ENCODE measurements at regions of chr17 and their contacts with region 1.

Region 1: GRCh38 chr17:3935140-3935542 is 18.9 kb upstream of the P2RX1 start:
- DNase-seq: peak in 6 of 9 experiments; percentile 26 to 66 (median 42)
- ATAC-seq: peak; percentile 62
- H3K4me3 ChIP-seq: no peak overlapping the region
- H3K4me3 Mint-ChIP-seq: no peak overlapping the region
- H3K27ac ChIP-seq: no peak overlapping the region
- H3K27ac Mint-ChIP-seq: no peak overlapping the region
- H3K4me1 ChIP-seq: no peaks in the 10 kb centered on the region
- H3K4me1 Mint-ChIP-seq: peaks cover 2% of the 10 kb centered on the region
- H3K27me3 ChIP-seq: no peaks in the 10 kb centered on the region
- H3K27me3 Mint-ChIP-seq: no peaks in the 10 kb centered on the region
- CTCF ChIP-seq: peak; percentile 34

Region 2: DNA sequence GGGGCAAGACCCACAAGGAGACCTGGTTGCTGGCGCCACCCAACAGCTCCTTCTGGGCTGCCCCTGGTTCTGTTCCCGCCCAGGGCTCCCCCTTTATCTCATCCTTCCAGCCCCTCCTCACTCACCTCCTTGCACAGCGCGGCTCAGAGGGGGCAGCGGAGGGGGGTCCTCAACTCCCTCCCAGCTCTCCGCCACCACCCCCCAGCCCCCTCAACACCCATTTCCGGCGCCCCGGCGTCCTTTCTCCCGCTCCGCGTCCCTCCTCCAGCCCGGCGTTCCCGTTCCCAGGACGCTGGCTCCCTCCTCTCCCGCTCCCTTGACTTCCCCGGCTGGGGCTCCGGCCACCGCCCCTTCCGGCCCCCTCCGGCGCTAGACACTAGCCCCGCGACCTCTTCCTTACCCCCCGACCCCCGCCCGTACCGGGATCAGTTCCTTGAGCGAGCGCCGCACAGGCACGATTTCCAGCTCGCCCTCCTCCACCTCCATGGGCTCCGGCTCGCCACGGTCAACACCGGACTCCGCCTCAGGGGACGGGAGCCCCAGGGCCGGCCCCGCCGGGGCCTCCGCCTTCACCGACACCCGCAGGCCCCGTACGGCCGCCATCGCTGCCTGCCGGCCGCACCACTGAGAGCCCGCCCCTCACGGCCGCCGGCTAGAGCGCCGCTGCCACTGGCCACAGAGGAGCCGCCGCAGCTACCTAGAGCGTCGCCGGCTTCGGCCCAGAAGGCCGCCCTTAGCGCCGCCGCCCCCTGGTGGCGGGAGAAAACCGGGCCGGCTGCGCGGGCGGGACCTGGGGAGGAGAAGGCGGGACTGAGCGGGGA is 89.3 kb before region 1 on chr17 and contains the start of gene NCBP3:
- CTCF ChIA-PET with region 1: no interaction called
- POLR2A ChIA-PET with region 1: no interaction called
- intact Hi-C with region 1: no loop called
- DNase-seq: peak; percentile 80 to 95 (median 91)
- ATAC-seq: peak; percentile 94
- H3K4me3 ChIP-seq: peak within 1 kb of the TSS; percentile 84 to 99
- H3K4me3 Mint-ChIP-seq: peak within 1 kb of the TSS; percentile 93
- H3K27ac ChIP-seq: peak within 1 kb of the TSS; percentile 77 to 87
- H3K27ac Mint-ChIP-seq: peak within 1 kb of the TSS; percentile 89
- H3K4me1 ChIP-seq: peaks cover 14% of the 10 kb centered on the region
- H3K4me1 Mint-ChIP-seq: peaks cover 29% of the 10 kb centered on the region
- H3K27me3 ChIP-seq: no peaks in the 10 kb centered on the region
- H3K27me3 Mint-ChIP-seq: peaks cover 2% of the 10 kb centered on the region
- CTCF ChIP-seq: peak; percentile 88
- total RNA-seq, gene NCBP3: 28.4 to 35.3 TPM

Region 3: GRCh38 chr17:3870871-3871306 is 64.3 kb before region 1 on chr17:
- CTCF ChIA-PET with region 1: no interaction called
- POLR2A ChIA-PET with region 1: no interaction called
- intact Hi-C with region 1: no loop called
- DNase-seq: peak in 5 of 9 experiments; percentile 11 to 69 (median 22)
- ATAC-seq: peak; percentile 38
- H3K4me3 ChIP-seq: no peak overlapping the region
- H3K4me3 Mint-ChIP-seq: peak overlapping the region; percentile 51
- H3K27ac ChIP-seq: peak overlapping the region; percentile 50 to 70
- H3K27ac Mint-ChIP-seq: peak overlapping the region; percentile 58
- H3K4me1 ChIP-seq: peaks cover 5% of the 10 kb centered on the region
- H3K4me1 Mint-ChIP-seq: peaks cover 2% of the 10 kb centered on the region
- H3K27me3 ChIP-seq: no peaks in the 10 kb centered on the region
- H3K27me3 Mint-ChIP-seq: no peaks in the 10 kb centered on the region
- CTCF ChIP-seq: no peak

Region 4: GRCh38 chr17:4004517-4005295 is 69.6 kb after region 1 on chr17:
- CTCF ChIA-PET with region 1: interaction called, 6 read pairs
- POLR2A ChIA-PET with region 1: no interaction called
- intact Hi-C with region 1: loop called (anchors 1 kb)
- DNase-seq: peak; percentile 16 to 79 (median 58)
- ATAC-seq: peak; percentile 94
- H3K4me3 ChIP-seq: no peak overlapping the region
- H3K4me3 Mint-ChIP-seq: no peak overlapping the region
- H3K27ac ChIP-seq: no peak overlapping the region
- H3K27ac Mint-ChIP-seq: no peak overlapping the region
- H3K4me1 ChIP-seq: peaks cover 4% of the 10 kb centered on the region
- H3K4me1 Mint-ChIP-seq: peaks cover 4% of the 10 kb centered on the region
- H3K27me3 ChIP-seq: no peaks in the 10 kb centered on the region
- H3K27me3 Mint-ChIP-seq: no peaks in the 10 kb centered on the region
- CTCF ChIP-seq: peak; percentile 98

Region 5: GRCh38 chr17:4054446-4054845 is 119.3 kb after region 1 on chr17:
- CTCF ChIA-PET with region 1: no interaction called
- POLR2A ChIA-PET with region 1: no interaction called
- intact Hi-C with region 1: no loop called
- DNase-seq: no peak
- ATAC-seq: no peak
- H3K4me3 ChIP-seq: no peak overlapping the region
- H3K4me3 Mint-ChIP-seq: no peak overlapping the region
- H3K27ac ChIP-seq: no peak overlapping the region
- H3K27ac Mint-ChIP-seq: peak overlapping the region; percentile 15
- H3K4me1 ChIP-seq: no peaks in the 10 kb centered on the region
- H3K4me1 Mint-ChIP-seq: no peaks in the 10 kb centered on the region
- H3K27me3 ChIP-seq: no peaks in the 10 kb centered on the region
- H3K27me3 Mint-ChIP-seq: no peaks in the 10 kb centered on the region
- CTCF ChIP-seq: no peak